Activated CD4-positive, alpha-beta T cell treated with anti-CD3 and anti-CD28 coated beads, Interleukin-2, amount 10 ng/mL, durations not matched to agents 7 days and 5 days (primary cell): ENCODE measurements at regions of chr12 and their contacts with region 1.

Region 1: DNA sequence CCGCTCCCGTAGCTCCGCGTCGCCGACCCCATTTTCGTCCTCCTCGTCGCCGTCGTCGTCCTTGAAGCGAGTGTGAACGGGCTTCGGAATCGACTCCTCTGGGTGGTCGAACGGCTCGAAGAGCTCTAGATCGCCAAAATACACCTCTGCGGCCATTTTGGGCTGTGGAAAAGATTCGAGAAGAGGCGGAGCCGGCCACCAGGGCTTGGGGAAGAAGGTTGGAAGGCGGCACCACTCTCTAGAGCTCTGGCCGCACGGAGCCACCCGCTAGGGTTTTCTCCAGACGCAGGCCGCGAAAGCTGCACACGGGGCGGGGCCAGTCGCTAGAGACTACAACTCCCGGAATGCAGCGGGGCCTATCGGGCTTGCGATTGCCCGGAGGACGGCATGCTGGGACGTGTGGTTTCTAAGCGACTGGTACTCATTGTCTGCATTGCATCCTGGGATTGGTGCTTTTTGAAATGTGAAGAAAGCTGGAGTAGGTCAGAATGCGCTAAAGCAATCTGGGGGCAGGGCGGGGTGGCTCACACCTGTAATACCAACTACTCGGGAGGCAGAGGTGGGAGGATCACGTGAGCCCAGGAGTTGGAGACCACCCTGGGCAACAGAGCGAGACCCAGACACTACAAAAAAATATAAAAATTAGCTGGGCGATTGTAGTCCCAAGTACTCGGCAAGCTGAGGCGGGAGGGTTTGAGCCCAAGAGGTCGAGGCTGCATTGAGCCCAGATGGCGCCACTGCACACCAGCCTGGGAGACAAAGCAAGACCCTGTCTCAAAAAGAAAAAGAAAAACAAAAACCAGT is at the start of gene ZCCHC8:
- DNase-seq: peak; percentile 98
- H3K4me3 Mint-ChIP-seq: peak within 1 kb of the TSS; percentile 97
- H3K27ac Mint-ChIP-seq: peak within 1 kb of the TSS; percentile 100
- H3K4me1 Mint-ChIP-seq: peaks cover 38% of the 10 kb centered on the region
- H3K27me3 Mint-ChIP-seq: no peaks in the 10 kb centered on the region
- total RNA-seq, gene ZCCHC8: 45.1 to 50.2 TPM

Region 2: GRCh38 chr12:122526683-122527477 is 26.0 kb after region 1 on chr12 and contains the starts of genes KNTC1 and RSRC2:
- CTCF ChIA-PET with region 1: interaction called, 6 read pairs
- POLR2A ChIA-PET with region 1: interaction called, 25 read pairs
- DNase-seq: peak; percentile 100
- H3K4me3 Mint-ChIP-seq: no peak within 1 kb of the TSS
- H3K27ac Mint-ChIP-seq: no peak within 1 kb of the TSS
- H3K4me1 Mint-ChIP-seq: peaks cover 33% of the 10 kb centered on the region
- H3K27me3 Mint-ChIP-seq: no peaks in the 10 kb centered on the region
- total RNA-seq, gene KNTC1: 124 to 136 TPM
- total RNA-seq, gene RSRC2: 79.6 to 82.3 TPM

Region 3: GRCh38 chr12:122681814-122682213 is 180.9 kb after region 1 on chr12:
- CTCF ChIA-PET with region 1: no interaction called
- POLR2A ChIA-PET with region 1: no interaction called
- DNase-seq: no peak
- H3K4me3 Mint-ChIP-seq: no peak overlapping the region
- H3K27ac Mint-ChIP-seq: no peak overlapping the region
- H3K4me1 Mint-ChIP-seq: no peaks in the 10 kb centered on the region
- H3K27me3 Mint-ChIP-seq: no peaks in the 10 kb centered on the region